ENCODE measurements at regions of chr3 and their contacts with region 1.

Region 1: DNA sequence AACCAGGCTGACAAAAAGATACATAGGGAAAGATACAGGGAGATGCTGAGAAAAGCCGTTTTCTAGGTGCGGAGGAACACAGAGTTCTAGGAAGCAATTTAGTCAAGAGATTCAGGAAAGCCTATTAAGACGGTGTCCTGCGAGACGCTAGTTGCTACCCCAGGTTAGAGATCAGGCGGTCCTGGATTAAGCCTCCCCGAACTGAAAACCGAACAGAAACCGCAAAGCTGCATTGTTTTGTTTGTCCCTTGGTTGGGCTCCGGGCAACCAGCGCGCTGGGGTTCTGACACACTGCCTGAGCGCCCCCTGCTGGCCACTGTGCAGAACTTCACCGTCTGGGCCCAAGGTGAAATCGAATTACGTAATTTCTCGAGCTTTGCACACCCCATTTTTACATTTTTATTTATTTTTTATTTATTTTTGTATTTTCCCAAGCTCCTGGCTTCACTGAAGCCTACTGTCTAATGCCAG is 37.3 kb upstream of the NDUFB4 start:
- DNase-seq: peak; percentile 74 to 94 (median 86)
- ATAC-seq: peak; percentile 93
- H3K4me3 ChIP-seq: peak overlapping the region; percentile 43
- H3K4me3 Mint-ChIP-seq: peak overlapping the region; percentile 78
- H3K27ac ChIP-seq: no peak overlapping the region
- H3K27ac Mint-ChIP-seq: peak overlapping the region; percentile 63
- H3K4me1 ChIP-seq: peaks cover 15% of the 10 kb centered on the region
- H3K4me1 Mint-ChIP-seq: peaks cover 24% of the 10 kb centered on the region
- H3K27me3 ChIP-seq: no peaks in the 10 kb centered on the region
- H3K27me3 Mint-ChIP-seq: peaks cover 16% of the 10 kb centered on the region
- CTCF ChIP-seq: peak; percentile 98

Region 2: GRCh38 chr3:120417272-120417911 is 141.4 kb before region 1 on chr3:
- CTCF ChIA-PET with region 1: interaction called, 11 read pairs
- POLR2A ChIA-PET with region 1: interaction called, 4 read pairs
- intact Hi-C with region 1: loop called (anchors 2 kb)
- DNase-seq: peak; percentile 69 to 91 (median 76)
- ATAC-seq: peak; percentile 99
- H3K4me3 ChIP-seq: peak overlapping the region; percentile 51
- H3K4me3 Mint-ChIP-seq: peak overlapping the region; percentile 77
- H3K27ac ChIP-seq: no peak overlapping the region
- H3K27ac Mint-ChIP-seq: no peak overlapping the region
- H3K4me1 ChIP-seq: peaks cover 18% of the 10 kb centered on the region
- H3K4me1 Mint-ChIP-seq: peaks cover 14% of the 10 kb centered on the region
- H3K27me3 ChIP-seq: no peaks in the 10 kb centered on the region
- H3K27me3 Mint-ChIP-seq: peaks cover 5% of the 10 kb centered on the region
- CTCF ChIP-seq: peak; percentile 87

Region 3: GRCh38 chr3:120596116-120596852 is 37.5 kb after region 1 on chr3 and contains the start of gene NDUFB4:
- CTCF ChIA-PET with region 1: interaction called, 38 read pairs
- POLR2A ChIA-PET with region 1: interaction called, 13 read pairs
- intact Hi-C with region 1: loop called (anchors 1 to 2 kb)
- DNase-seq: peak; percentile 87 to 99 (median 94)
- ATAC-seq: peak; percentile 87
- H3K4me3 ChIP-seq: peak within 1 kb of the TSS; percentile 88
- H3K4me3 Mint-ChIP-seq: peak within 1 kb of the TSS; percentile 98
- H3K27ac ChIP-seq: peak within 1 kb of the TSS; percentile 94 to 95
- H3K27ac Mint-ChIP-seq: no peak within 1 kb of the TSS
- H3K4me1 ChIP-seq: peaks cover 14% of the 10 kb centered on the region
- H3K4me1 Mint-ChIP-seq: peaks cover 8% of the 10 kb centered on the region
- H3K27me3 ChIP-seq: no peaks in the 10 kb centered on the region
- H3K27me3 Mint-ChIP-seq: no peaks in the 10 kb centered on the region
- CTCF ChIP-seq: no peak
- total RNA-seq, gene NDUFB4: 81.3 to 84.0 TPM